Panc1 (cell line): ENCODE measurements at regions of chr1 and their contacts with region 1.

Region 1: DNA sequence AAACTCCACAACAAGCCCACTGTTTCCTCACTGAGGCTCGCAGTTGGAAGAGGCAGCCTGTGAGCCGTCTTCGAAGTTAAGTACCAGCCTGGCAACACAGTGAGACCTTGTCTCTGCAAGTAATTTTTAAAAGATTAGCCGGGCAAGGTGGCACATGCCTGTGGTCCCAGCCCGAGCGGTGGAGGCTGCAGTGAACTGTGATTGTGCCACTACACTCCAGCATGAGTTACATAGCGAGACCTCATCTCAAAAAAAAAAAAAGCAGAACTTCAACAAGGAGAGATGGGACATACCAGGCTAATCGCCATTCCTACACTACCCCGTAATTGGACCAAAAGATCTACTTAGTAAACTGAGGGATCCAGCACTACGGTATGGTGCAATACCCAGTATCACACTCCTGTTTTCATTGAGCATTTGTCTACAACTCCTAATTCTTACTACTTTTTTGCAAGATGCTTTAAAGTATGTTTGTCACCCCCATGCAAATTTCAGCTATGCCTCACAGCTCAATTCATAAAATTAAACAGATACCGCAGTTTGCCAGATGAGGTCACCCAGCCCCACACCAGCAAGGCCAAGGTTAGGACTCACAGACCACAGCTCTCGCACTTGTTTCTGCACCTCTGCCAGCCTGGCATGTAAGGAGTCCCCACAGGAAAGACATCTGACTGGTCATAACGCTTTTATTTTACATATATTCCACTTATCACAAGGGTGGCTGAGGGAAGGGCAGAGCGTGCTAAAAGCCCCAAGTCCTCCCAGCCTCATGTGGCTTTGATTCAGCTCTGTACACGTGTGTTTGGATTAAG is 21.0 kb downstream of the SDE2 start:
- DNase-seq: no peak
- ATAC-seq: no peak
- H3K4me3 ChIP-seq: no peak overlapping the region
- H3K27ac ChIP-seq: no peak overlapping the region
- H3K4me1 ChIP-seq: peaks cover 1% of the 10 kb centered on the region; the same call in 1 of the 2 replicates
- H3K27me3 ChIP-seq: no peaks in the 10 kb centered on the region
- CTCF ChIP-seq: no peak

Region 2: GRCh38 chr1:225474986-225475820 is 502.9 kb before region 1 on chr1:
- CTCF ChIA-PET with region 1: no interaction called
- POLR2A ChIA-PET with region 1: no interaction called
- in situ Hi-C with region 1: no loop called
- intact Hi-C with region 1: loop called (anchors 2 kb)
- DNase-seq: no peak
- ATAC-seq: peak; percentile 90
- H3K4me3 ChIP-seq: peak overlapping the region in 1 of 2 experiments; percentile 26; a peak in 2 of 4 replicates
- H3K27ac ChIP-seq: no peak overlapping the region
- H3K4me1 ChIP-seq: no peaks in the 10 kb centered on the region
- H3K27me3 ChIP-seq: no peaks in the 10 kb centered on the region
- CTCF ChIP-seq: peak; percentile 100

Region 3: GRCh38 chr1:225825607-225826007 is 152.5 kb before region 1 on chr1:
- CTCF ChIA-PET with region 1: no interaction called
- POLR2A ChIA-PET with region 1: no interaction called
- in situ Hi-C with region 1: no loop called
- intact Hi-C with region 1: no loop called
- DNase-seq: no peak
- ATAC-seq: no peak
- H3K4me3 ChIP-seq: no peak overlapping the region
- H3K27ac ChIP-seq: no peak overlapping the region
- H3K4me1 ChIP-seq: peaks cover 5% of the 10 kb centered on the region
- H3K27me3 ChIP-seq: no peaks in the 10 kb centered on the region
- CTCF ChIP-seq: no peak

Region 4: DNA sequence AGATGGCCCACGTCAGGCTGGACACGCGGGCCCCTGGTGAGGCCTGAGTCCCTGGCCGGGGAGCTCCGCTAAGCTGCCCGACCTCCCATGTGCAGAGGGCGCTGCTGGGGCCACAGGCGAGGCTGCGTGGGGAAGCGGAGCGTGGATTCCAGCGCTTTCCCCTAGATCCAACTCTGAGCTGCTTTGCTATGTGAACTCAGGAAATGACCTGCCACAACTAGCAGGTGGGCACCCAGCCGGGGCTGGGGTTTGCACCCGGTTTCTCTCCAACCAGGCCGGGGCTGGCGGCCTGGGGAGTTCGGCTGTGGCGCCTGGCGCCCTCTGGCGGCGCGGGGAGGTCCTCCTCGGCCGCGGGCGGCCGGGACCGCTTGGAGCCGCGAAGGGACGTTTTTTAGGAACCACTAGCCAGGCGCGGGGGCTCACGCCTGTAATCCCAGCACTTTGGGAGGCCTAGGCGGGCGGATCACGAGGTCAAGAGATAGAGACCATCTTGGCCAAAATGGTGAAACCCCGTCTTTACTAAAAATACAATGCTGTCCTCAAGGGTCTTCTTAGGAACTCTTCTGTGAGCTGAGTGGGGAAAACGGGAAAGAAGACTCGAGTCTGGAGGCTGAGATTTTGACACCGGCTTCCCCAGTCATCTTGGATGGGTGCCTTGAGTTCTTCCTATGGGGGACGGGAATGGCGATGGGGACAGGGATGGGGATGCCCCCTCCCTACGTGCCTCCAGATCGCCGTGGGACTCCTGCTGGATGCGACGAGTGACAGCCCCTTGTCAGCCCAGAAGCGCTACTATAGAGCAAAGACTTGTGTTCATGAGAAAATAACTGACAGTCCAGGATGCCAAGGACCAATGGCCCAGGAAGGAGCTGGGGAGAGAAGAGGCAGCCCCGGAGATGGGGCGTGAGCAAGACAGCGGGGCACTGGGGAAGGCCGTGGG is 66.7 kb before region 1 on chr1:
- CTCF ChIA-PET with region 1: no interaction called
- POLR2A ChIA-PET with region 1: no interaction called
- in situ Hi-C with region 1: no loop called
- intact Hi-C with region 1: loop called (anchors 10 kb)
- DNase-seq: no peak
- ATAC-seq: peak; percentile 93
- H3K4me3 ChIP-seq: no peak overlapping the region
- H3K27ac ChIP-seq: no peak overlapping the region
- H3K4me1 ChIP-seq: no peaks in the 10 kb centered on the region
- H3K27me3 ChIP-seq: no peaks in the 10 kb centered on the region
- CTCF ChIP-seq: peak; percentile 97